Right ventricle myocardium inferior (tissue), 1 donor: ENCODE measurements at regions of chr2 and their contacts with region 1.

Region 1: DNA sequence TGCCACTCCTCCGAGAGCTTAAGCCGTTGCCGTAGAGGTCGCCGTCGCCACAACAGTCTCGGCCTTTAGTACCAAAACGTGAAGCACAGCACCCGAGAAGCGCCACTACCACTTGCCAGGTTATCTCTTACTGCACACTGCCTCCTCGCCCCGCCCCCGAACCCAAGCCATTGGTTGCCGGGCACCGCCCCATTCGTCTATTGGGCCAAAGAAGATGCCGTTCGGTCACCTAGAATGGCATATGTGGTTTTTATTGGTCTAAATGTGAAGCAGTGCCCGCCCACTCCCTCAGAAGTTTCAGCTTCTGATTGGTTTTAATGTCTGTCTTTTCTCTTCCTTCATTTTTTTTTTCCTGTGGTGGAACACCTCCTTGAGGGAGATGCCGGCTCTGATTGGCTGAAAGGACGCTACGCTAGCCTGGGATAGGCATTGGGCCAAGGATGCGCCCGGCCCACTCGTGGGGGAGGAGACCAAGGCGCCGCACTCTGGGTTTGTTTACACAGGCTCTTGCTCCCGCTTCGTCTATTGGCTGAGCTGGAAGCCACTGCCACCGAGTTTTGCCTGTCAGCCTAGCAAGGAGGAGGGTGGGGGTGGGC is at the start of gene PAIP2B:
- DNase-seq: peak; percentile 99
- ATAC-seq: peak; percentile 96
- total RNA-seq, gene PAIP2B: 64.9 TPM

Region 2: DNA sequence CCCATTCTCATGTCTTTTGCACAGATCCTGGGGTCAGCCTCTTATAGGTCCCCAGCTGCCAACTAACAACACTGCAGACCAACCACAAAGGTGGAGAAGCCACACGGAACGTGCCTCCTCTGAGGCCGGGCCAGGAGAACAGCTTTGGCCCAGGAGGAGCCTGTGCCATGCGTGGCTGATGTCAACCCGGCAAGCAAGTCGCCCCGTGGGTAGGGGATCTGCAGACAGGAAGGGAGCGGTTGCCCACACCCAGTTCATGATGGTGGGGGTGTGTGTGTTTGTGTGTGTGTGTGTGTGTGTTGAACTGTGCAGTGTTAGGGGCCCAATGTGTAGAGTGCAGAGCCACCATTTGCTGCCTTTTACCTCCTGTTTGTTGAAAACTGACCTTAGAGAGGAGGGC is 404.2 kb before region 1 on chr2:
- intact Hi-C with region 1: no loop called
- DNase-seq: no peak
- ATAC-seq: no peak

Region 3: DNA sequence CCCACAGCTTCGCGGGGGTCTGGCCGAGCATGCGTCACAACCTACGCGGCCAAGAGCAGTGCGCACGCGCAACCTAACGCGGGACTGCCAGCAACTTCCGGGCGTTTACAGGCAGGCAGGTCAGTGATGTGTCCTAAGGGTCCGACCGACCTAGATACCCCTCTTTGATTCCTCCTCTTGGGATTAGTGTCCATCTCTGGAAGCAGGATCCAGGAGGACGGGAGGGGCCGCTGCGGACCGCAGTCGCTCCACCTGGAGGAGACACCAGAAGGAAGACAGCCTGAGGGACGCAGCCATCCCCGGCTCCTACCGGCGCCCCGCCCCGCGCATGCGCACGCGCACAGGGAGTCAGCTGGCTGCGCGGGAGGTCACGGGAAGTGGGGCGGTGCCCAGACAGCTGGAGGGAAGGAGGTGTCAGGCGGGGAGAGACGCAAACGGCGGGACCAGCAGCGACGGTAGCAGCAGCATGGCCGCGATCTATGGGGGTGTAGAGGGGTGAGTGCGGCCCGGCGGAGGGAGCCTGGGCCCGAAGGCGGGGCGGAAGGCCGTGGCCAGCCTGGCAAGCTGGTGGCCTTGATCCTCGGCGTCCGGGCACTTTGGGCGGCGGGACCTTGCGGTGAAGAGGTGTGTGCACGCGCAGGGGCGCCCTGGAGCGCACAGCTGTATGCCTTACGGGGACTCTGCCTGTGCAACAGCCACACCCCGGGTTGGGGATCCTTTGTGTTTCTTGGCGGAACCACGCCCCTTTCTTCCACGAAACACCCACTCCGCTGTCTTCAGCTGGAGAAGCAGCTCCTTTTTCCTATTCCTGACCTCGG is 158.6 kb before region 1 on chr2 and contains the start of gene NAGK:
- intact Hi-C with region 1: no loop called
- DNase-seq: peak; percentile 99
- ATAC-seq: peak; percentile 95
- total RNA-seq, gene NAGK: 56.0 TPM

Region 4: GRCh38 chr2:71256421-71256820 is 29.4 kb after region 1 on chr2:
- intact Hi-C with region 1: no loop called
- DNase-seq: no peak
- ATAC-seq: no peak

Region 5: GRCh38 chr2:71331581-71332434 is 104.7 kb after region 1 on chr2 and contains the start of gene ZNF638:
- intact Hi-C with region 1: loop called (anchors 1 kb)
- DNase-seq: peak; percentile 98
- ATAC-seq: peak; percentile 98
- total RNA-seq, gene ZNF638: 91.9 TPM

Region 6: GRCh38 chr2:71505086-71505769 is 278.2 kb after region 1 on chr2:
- intact Hi-C with region 1: loop called (anchors 10 kb)
- DNase-seq: no peak
- ATAC-seq: peak; percentile 1

Region 7: DNA sequence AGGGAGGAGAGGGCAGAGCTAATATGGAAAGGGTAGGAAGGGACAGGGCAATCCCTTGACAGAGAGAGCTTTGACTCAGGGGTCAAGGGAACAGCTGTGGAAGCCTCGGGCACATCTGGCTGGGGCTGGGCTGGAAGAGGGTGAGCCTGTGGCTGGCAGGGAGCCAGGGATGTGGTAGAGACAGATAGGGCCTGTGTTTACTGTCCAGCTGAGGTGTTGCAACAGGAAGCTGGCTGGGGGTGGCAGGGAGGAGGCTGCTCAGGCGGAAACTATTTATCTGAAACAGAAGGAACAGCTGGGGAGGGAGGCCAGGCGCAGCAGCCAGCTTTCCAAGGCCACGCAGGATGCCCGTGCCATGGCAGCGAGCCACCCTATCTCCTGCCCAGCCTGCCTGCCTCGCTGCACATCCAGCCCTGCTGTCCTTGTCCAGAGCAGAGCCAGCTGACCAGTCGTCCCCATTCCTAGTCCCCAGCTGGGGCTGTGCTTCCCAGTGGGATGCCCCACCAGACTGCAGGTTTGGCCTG is 655.9 kb after region 1 on chr2:
- intact Hi-C with region 1: no loop called
- DNase-seq: peak; percentile 88
- ATAC-seq: peak; percentile 81